HepG2 (cell line): ENCODE measurements at regions of chr2 and their contacts with region 1.

Region 1: DNA sequence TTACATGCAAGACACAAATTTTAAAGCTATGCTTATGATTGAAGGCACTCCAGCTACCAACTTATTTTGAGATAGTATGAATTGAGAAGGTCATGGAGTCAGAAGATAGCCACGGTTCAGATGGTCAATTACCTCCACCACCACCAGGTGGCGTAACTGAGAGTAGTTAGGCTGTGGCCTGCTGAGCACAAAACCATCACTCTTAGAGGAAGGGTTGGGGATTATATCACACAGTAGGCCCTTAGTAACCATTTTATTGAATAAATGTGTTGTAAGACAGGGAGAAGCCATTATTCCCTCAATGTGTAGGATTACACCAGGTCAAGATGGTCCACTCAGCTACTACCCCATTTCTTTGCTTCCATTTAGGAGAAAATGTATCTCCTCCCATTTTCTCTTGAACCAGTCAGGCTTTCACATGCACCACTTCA is 18.8 kb downstream of the KLHL41 start:
- DNase-seq: peak; percentile 65
- ATAC-seq: peak; percentile 95
- H3K4me3 ChIP-seq: no peak overlapping the region
- H3K27ac ChIP-seq: no peak overlapping the region
- H3K4me1 ChIP-seq: peaks cover 16% of the 10 kb centered on the region
- H3K27me3 ChIP-seq: no peaks in the 10 kb centered on the region
- CTCF ChIP-seq: peak; percentile 91
- EP300 ChIP-seq: no peak
- POLR2A ChIP-seq: no peak
- RAD21 ChIP-seq: peak; percentile 68; the same call in 1 of the 2 replicates

Region 2: GRCh38 chr2:169479257-169480078 is 48.8 kb before region 1 on chr2 and contains the start of gene BBS5:
- CTCF ChIA-PET with region 1: interaction called, 10 read pairs
- POLR2A ChIA-PET with region 1: no interaction called
- in situ Hi-C with region 1: no loop called
- intact Hi-C with region 1: loop called (anchors 5 kb)
- DNase-seq: peak; percentile 64
- ATAC-seq: peak; percentile 95
- H3K4me3 ChIP-seq: peak within 1 kb of the TSS; percentile 62 to 85 (median 85)
- H3K27ac ChIP-seq: no peak within 1 kb of the TSS
- H3K4me1 ChIP-seq: peaks cover 55% of the 10 kb centered on the region
- H3K27me3 ChIP-seq: no peaks in the 10 kb centered on the region; a peak in 1 of 5 replicates
- CTCF ChIP-seq: peak; percentile 97
- EP300 ChIP-seq: no peak
- POLR2A ChIP-seq: peak; percentile 39 to 55
- RAD21 ChIP-seq: peak; percentile 82
- total RNA-seq, gene BBS5: 3.3 and 4.5 TPM in 2 replicates

Region 3: DNA sequence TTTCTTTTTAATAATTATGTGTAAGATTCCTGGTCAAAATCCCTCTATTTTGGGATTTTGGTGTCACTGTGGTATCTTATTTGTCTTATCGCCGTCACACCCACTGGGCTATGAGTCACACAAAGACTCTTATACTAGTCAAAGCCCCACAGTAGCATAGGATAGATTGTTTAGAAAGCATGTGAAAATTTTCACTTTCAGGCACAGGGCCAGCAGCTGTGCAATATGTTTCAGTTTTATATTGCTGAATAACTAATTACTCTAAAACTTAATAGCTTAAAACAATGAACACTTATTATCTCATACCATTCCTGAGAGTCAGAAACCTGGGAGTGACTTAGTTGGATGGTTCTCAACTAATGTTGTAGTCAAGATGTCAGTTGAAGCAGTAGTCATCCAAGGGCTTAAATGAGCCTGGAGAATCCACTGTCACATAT is 141.9 kb after region 1 on chr2:
- CTCF ChIA-PET with region 1: no interaction called
- POLR2A ChIA-PET with region 1: no interaction called
- in situ Hi-C with region 1: loop called (anchors 10 kb)
- intact Hi-C with region 1: no loop called
- DNase-seq: peak; percentile 38
- ATAC-seq: peak; percentile 37; the same call in 2 of the 3 replicates
- H3K4me3 ChIP-seq: no peak overlapping the region
- H3K27ac ChIP-seq: no peak overlapping the region
- H3K4me1 ChIP-seq: peaks cover 4% of the 10 kb centered on the region; the same call in 1 of the 2 replicates
- H3K27me3 ChIP-seq: no peaks in the 10 kb centered on the region
- CTCF ChIP-seq: no peak
- EP300 ChIP-seq: no peak
- POLR2A ChIP-seq: no peak
- RAD21 ChIP-seq: no peak

Region 4: GRCh38 chr2:169676357-169676756 is 148.1 kb after region 1 on chr2:
- CTCF ChIA-PET with region 1: interaction called, 10 read pairs
- POLR2A ChIA-PET with region 1: no interaction called
- in situ Hi-C with region 1: loop called (anchors 10 kb)
- intact Hi-C with region 1: loop called (anchors 1 kb)
- DNase-seq: no peak
- ATAC-seq: peak; percentile 80
- H3K4me3 ChIP-seq: no peak overlapping the region
- H3K27ac ChIP-seq: no peak overlapping the region
- H3K4me1 ChIP-seq: peaks cover 13% of the 10 kb centered on the region
- H3K27me3 ChIP-seq: no peaks in the 10 kb centered on the region
- CTCF ChIP-seq: peak; percentile 56
- EP300 ChIP-seq: no peak
- POLR2A ChIP-seq: no peak
- RAD21 ChIP-seq: peak; percentile 60; the same call in 1 of the 2 replicates

Region 5: GRCh38 chr2:169790581-169790980 is 262.3 kb after region 1 on chr2:
- CTCF ChIA-PET with region 1: interaction called, 3 read pairs
- POLR2A ChIA-PET with region 1: no interaction called
- in situ Hi-C with region 1: no loop called
- intact Hi-C with region 1: loop called (anchors 2 kb)
- DNase-seq: no peak
- ATAC-seq: no peak
- H3K4me3 ChIP-seq: no peak overlapping the region
- H3K27ac ChIP-seq: no peak overlapping the region
- H3K4me1 ChIP-seq: peaks cover 12% of the 10 kb centered on the region
- H3K27me3 ChIP-seq: no peaks in the 10 kb centered on the region
- CTCF ChIP-seq: no peak
- EP300 ChIP-seq: no peak
- POLR2A ChIP-seq: no peak
- RAD21 ChIP-seq: no peak